Activated CD4-positive, alpha-beta memory T cell treated with anti-CD3 and anti-CD28 coated beads, Interleukin-2, amount 10 ng/mL, durations not matched to agents 7 days and 5 days (primary cell): ENCODE measurements at regions of chr19 and their contacts with region 1.

Region 1: DNA sequence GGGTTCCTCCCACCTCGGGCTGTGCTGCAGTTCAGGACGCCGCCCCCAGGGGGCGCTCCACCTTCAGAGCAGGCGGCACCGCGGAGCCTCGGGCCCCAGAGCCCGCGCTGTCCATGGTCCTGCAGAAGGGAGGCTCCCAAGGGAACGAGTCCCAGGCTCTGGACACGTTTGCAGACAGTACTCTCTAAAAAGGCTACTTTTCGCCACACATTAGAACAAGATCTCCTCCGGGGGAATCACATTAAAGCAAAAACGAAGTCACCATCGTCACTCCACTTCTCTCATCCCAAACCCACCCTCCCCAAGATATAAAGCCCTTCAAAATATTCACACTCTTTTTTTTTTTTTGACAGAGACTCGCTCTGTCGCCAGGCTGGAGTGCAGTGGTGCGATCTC is 4.6 kb upstream of the SIGLEC10 start:
- DNase-seq: peak; percentile 88
- H3K4me3 Mint-ChIP-seq: no peak overlapping the region
- H3K27ac Mint-ChIP-seq: no peak overlapping the region
- H3K4me1 Mint-ChIP-seq: peaks cover 9% of the 10 kb centered on the region
- H3K27me3 Mint-ChIP-seq: peaks cover 24% of the 10 kb centered on the region

Region 2: GRCh38 chr19:51407511-51408131 is 14.4 kb before region 1 on chr19:
- CTCF ChIA-PET with region 1: interaction called, 10 read pairs
- POLR2A ChIA-PET with region 1: no interaction called
- DNase-seq: peak; percentile 51
- H3K4me3 Mint-ChIP-seq: no peak overlapping the region
- H3K27ac Mint-ChIP-seq: no peak overlapping the region
- H3K4me1 Mint-ChIP-seq: peaks cover 8% of the 10 kb centered on the region
- H3K27me3 Mint-ChIP-seq: no peaks in the 10 kb centered on the region

Region 3: GRCh38 chr19:51441410-51442390 is 19.6 kb after region 1 on chr19:
- CTCF ChIA-PET with region 1: interaction called, 57 read pairs
- POLR2A ChIA-PET with region 1: interaction called, 3 read pairs
- DNase-seq: peak; percentile 95
- H3K4me3 Mint-ChIP-seq: peak overlapping the region; percentile 72
- H3K27ac Mint-ChIP-seq: peak overlapping the region; percentile 77
- H3K4me1 Mint-ChIP-seq: peaks cover 47% of the 10 kb centered on the region
- H3K27me3 Mint-ChIP-seq: peaks cover 29% of the 10 kb centered on the region

Region 4: DNA sequence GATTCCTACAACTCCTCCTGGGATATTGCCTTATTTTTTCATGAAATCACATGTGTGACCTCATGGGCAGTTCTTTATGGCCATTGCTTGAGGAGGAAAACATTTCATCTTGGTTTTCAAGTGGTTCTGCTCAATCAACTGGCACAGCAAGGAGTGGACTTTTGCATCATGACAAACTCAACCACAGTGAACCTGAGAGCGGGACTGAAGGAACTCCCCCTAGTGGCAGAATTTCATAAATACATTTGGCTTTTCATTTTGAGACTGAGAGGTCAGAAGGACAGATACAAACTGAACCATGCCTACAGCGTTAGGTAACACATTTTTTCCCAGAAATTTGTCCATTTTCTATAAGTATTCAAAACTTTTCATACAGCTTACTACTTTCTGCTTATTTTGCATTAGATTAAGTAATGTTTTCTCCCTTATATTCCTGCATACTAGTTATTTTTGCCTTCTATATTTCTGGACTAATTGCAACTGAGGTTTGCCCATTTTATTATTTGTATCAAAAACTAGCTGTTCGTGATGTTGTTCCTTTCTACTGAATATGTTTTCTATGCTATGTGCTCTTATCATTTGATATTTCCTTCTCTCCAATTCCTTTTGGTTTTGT is 92.9 kb after region 1 on chr19:
- CTCF ChIA-PET with region 1: interaction called, 11 read pairs
- POLR2A ChIA-PET with region 1: no interaction called
- DNase-seq: no peak
- H3K4me3 Mint-ChIP-seq: no peak overlapping the region
- H3K27ac Mint-ChIP-seq: no peak overlapping the region
- H3K4me1 Mint-ChIP-seq: peaks cover 7% of the 10 kb centered on the region
- H3K27me3 Mint-ChIP-seq: peaks cover 29% of the 10 kb centered on the region